HEK293 (cell line): ENCODE measurements at regions of chr10 and their contacts with region 1.

Region 1: GRCh38 chr10:43407576-43408330 is 1.2 kb downstream of the HNRNPF start:
- H3K4me3 ChIP-seq: peak overlapping the region; percentile 74
- H3K27ac ChIP-seq: peak overlapping the region; percentile 96
- H3K4me1 ChIP-seq: peaks cover 10% of the 10 kb centered on the region; the same call in 1 of the 2 replicates
- CTCF ChIP-seq: peak; percentile 82

Region 2: GRCh38 chr10:43376828-43377423 is 30.8 kb before region 1 on chr10:
- CTCF ChIA-PET with region 1: no interaction called
- POLR2A ChIA-PET with region 1: no interaction called
- H3K4me3 ChIP-seq: no peak overlapping the region
- H3K27ac ChIP-seq: no peak overlapping the region
- H3K4me1 ChIP-seq: no peaks in the 10 kb centered on the region
- CTCF ChIP-seq: no peak

Region 3: DNA sequence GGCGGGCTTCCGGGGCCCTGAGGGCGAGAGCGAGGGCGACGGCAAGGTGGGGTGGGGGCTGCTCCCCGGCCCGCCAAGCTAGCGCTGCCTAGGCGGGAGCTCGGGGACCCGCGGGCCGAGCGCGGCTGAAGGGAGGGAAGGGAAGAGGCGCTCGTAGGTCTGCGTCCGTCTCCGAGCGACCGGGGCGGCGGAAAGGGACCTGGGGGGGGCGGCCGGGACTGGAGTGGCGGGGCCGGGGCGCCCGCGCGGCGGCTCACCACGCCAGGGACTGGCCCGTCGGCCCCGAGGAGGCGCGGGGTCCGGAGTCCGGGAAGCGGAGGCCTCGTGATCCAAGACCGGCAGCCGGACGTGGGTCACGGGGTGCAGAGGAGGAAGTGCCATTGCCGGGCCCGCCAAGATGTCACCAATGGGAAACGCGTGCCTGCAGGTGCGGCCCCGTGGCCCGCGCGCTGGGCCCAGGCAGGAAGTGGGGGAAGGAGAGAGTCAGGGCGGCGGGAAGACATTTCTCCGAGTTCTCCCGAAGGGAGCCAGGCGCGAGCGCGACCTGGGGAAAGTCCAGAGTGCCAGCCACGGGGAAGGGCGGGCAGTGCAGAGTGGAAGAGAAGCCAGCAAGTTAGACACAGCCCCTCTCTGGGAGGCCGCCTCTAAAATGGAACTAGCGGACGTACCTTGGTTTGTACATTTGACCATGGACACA is 10.7 kb before region 1 on chr10:
- CTCF ChIA-PET with region 1: no interaction called
- POLR2A ChIA-PET with region 1: interaction called, 29 read pairs
- H3K4me3 ChIP-seq: peak overlapping the region; percentile 58
- H3K27ac ChIP-seq: peak overlapping the region; percentile 99
- H3K4me1 ChIP-seq: peaks cover 6% of the 10 kb centered on the region
- CTCF ChIP-seq: peak; percentile 9; the same call in 1 of the 2 replicates

Region 4: GRCh38 chr10:43420369-43421200 is 12.8 kb after region 1 on chr10:
- CTCF ChIA-PET with region 1: interaction called, 5 read pairs
- POLR2A ChIA-PET with region 1: interaction called, 11 read pairs
- H3K4me3 ChIP-seq: peak overlapping the region; percentile 49
- H3K27ac ChIP-seq: peak overlapping the region; percentile 90
- H3K4me1 ChIP-seq: no peaks in the 10 kb centered on the region
- CTCF ChIP-seq: peak; percentile 81

Region 5: DNA sequence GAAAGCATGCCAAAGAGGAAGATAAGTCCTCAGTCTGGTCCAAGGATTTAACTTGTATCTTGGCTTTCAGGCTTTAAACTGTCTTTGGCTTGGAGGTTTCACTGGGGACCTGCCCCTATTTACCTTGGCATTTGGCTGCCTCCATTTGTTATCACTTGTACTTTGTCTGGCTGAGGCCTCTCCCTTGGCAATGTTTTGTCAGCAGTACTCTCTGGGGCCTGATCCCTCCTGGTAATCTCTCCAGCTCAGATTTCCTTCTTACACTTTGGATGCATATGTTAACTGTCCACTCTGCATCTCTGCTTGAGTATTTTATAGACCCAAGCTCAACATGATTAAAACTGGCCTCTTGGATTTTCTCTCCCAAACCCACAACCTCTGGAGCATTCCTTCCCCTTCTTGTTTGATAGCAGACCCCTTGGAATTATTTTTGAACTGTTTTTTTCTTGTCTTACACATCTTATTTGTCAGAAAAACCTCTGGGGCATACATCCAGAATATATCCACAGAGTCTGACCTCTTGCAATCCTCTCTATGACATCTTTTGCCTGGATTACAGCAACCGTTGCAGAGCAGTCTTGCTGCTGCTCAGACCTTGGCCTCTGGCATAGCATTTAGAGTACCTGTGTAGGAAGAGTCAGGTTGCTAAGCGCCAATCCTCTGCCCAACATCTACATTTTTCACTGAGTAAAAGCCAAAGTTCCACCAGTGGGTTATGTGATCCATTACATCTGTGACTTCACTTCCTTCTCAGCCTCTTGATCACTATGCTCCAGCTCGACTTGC is 64.4 kb after region 1 on chr10:
- CTCF ChIA-PET with region 1: no interaction called
- POLR2A ChIA-PET with region 1: no interaction called
- H3K4me3 ChIP-seq: no peak overlapping the region
- H3K27ac ChIP-seq: no peak overlapping the region
- H3K4me1 ChIP-seq: no peaks in the 10 kb centered on the region
- CTCF ChIP-seq: no peak